Endothelial cell of umbilical vein (primary cell): ENCODE measurements at regions of chr1 and their contacts with region 1.

Region 1: DNA sequence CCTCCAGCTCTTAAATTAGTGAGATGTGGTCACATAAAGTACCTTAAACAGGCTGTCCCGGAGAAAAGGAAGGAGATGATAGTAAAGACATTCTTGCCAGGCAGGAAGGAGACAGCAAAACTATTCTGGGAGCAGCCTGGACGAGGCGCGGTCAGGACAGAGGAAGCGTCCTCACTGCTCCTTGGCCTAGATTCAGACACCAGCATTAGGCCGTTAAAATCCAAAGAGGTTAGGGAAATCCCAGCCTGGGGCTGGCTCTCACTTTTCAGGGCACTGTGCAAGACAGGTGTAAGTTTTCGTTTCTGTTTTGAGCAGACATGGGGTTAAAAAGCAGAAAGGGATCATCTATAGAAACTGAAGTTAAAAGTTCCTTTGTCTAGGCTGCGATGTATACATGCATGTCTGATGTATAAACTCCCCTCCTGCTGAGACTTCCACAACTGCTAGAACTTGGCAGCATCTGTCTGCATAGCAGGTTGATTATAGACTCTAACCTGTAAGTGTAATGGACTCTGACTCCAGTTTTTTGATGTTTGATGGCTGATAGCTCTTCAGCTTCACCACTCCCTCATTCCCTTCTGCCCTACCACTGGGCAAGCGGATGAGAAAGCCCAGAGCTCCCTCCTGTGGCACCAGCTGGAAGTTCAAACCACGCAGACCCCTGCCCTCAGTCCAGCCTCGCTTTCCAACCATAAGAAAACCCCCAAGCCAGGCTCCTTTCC is 21.5 kb downstream of the STPG1 start:
- DNase-seq: peak; percentile 75
- H3K4me3 ChIP-seq: peak overlapping the region in 1 of 3 experiments; percentile 32
- H3K27ac ChIP-seq: peak overlapping the region; percentile 32
- H3K4me1 ChIP-seq: peaks cover 40% of the 10 kb centered on the region
- H3K27me3 ChIP-seq: no peaks in the 10 kb centered on the region
- CTCF ChIP-seq: peak; percentile 91 to 92
- POLR2A ChIP-seq: no peak

Region 2: DNA sequence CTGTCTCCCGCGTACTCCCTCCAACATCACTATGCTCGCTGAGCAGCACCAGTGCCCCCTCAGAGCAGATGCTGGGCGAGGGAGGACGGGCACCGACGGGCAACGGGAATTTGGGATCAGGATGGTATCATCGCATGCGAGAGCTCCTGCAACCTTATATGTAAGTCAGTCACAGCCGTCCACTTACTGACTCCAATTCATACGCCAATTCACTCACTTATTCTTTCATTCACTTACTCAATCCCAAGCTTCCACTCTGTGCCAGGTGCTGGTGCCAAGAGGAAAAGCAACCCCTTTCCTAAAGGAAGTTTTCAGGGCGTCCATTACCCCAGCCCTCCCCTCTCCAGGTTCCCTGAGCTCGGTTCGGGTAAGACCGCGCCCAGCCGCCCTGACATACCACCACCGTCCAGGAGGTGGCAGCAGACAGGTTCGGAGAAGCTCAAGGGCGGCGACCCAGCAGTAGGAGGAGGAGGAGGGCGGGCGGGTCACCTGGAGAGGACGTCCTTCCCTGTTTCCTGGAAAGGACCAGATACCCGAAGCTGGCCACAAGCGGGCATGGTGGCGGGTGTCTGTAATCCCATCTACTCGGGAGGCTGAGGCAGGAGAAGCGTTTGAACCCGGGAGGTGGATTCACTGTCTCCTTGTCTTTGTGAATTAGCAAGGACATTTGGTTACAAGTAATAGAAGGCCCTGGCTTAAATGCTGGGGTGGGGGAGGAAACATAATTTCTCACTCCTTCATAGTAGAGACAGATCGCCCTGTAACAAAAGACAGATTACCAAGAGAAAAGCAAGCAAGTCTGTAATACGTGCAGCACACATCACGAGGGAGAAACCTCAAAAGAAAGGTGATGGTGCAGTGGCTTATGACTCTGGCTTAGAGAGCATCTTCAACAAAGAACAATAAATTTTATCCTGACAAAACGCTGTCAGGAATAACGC is 241.5 kb before region 1 on chr1:
- CTCF ChIA-PET with region 1: interaction called, 81 read pairs
- POLR2A ChIA-PET with region 1: no interaction called
- dilution Hi-C with region 1: no loop called
- intact Hi-C with region 1: loop called (anchors 1 kb)
- DNase-seq: peak; percentile 83
- H3K4me3 ChIP-seq: peak overlapping the region in 1 of 3 experiments; percentile 19
- H3K27ac ChIP-seq: no peak overlapping the region
- H3K4me1 ChIP-seq: peaks cover 11% of the 10 kb centered on the region
- H3K27me3 ChIP-seq: peaks cover 11% of the 10 kb centered on the region in 2 experiments
- CTCF ChIP-seq: peak; percentile 79 to 94
- POLR2A ChIP-seq: no peak

Region 3: GRCh38 chr1:24344090-24344742 is 47.8 kb before region 1 on chr1:
- CTCF ChIA-PET with region 1: interaction called, 11 read pairs
- POLR2A ChIA-PET with region 1: no interaction called
- dilution Hi-C with region 1: no loop called
- intact Hi-C with region 1: no loop called
- DNase-seq: no peak
- H3K4me3 ChIP-seq: no peak overlapping the region
- H3K27ac ChIP-seq: no peak overlapping the region
- H3K4me1 ChIP-seq: no peaks in the 10 kb centered on the region
- H3K27me3 ChIP-seq: peaks cover 0 to 2% of the 10 kb centered on the region in 2 experiments
- CTCF ChIP-seq: no peak
- POLR2A ChIP-seq: no peak

Region 4: GRCh38 chr1:24409535-24409934 is 17.5 kb after region 1 on chr1:
- CTCF ChIA-PET with region 1: interaction called, 134 read pairs
- POLR2A ChIA-PET with region 1: no interaction called
- dilution Hi-C with region 1: no loop called
- intact Hi-C with region 1: no loop called
- DNase-seq: peak; percentile 49
- H3K4me3 ChIP-seq: no peak overlapping the region
- H3K27ac ChIP-seq: no peak overlapping the region
- H3K4me1 ChIP-seq: peaks cover 19% of the 10 kb centered on the region
- H3K27me3 ChIP-seq: no peaks in the 10 kb centered on the region
- CTCF ChIP-seq: no peak
- POLR2A ChIP-seq: no peak

Region 5: DNA sequence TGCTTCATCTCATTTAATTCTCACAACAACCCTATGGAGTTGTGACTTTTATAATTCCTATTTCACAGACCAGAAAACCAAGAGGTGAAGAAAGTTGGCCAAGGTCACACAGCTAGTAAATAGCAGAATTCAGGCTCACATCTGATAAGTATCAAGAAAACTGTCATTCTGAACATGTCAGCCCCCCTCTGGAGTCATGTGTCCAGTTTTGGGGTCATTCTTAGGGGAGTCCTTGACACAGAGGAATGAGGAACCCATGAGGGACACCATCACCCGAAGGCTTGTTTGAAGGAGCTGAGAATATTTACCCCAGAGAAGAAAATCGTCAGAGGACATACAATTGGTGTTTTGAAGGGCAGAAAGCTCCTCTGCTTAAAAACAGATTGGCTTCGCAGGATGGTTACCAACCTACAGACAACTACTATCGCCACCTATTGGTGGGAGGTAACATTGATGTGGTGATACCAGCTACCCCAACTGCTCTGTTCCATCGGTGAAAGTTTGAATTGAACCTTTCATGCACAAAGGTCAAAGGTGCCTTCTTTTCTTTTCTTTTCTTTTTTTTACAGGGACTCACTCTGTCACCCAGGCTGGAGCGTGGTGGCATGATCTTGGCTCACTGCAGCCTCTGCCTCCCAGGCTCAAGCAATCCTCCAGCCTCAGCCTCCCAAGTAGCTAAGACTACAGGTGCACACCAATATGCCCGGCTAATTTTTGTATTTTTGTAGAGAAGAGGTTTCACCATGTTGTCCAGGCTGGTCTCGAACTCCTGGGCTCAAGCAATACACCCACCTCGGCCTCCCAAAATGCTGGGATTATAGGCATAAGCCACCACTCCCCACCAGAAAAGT is 195.2 kb after region 1 on chr1:
- CTCF ChIA-PET with region 1: interaction called, 18 read pairs
- POLR2A ChIA-PET with region 1: no interaction called
- dilution Hi-C with region 1: no loop called
- intact Hi-C with region 1: loop called (anchors 1 kb)
- DNase-seq: peak; percentile 39
- H3K4me3 ChIP-seq: no peak overlapping the region
- H3K27ac ChIP-seq: no peak overlapping the region
- H3K4me1 ChIP-seq: no peaks in the 10 kb centered on the region
- H3K27me3 ChIP-seq: peaks cover 0 to 6% of the 10 kb centered on the region in 2 experiments
- CTCF ChIP-seq: peak; percentile 74 to 78
- POLR2A ChIP-seq: no peak